Naive thymus-derived CD4-positive, alpha-beta T cell (primary cell): ENCODE measurements at regions of chr13 and their contacts with region 1.

Region 1: GRCh38 chr13:52128714-52129700 is at the start of gene NEK5:
- DNase-seq: peak; percentile 36 to 75 (median 55)
- ATAC-seq: peak; percentile 82
- H3K4me3 ChIP-seq: peak within 1 kb of the TSS; percentile 51
- H3K4me3 Mint-ChIP-seq: peak within 1 kb of the TSS; percentile 85 to 94 (median 88)
- H3K27ac ChIP-seq: no peak within 1 kb of the TSS
- H3K27ac Mint-ChIP-seq: peak within 1 kb of the TSS in 4 of 9 donors; percentile 3 to 19 (median 6)
- H3K4me1 ChIP-seq: peaks cover 11 to 13% of the 10 kb centered on the region in 2 donors
- H3K4me1 Mint-ChIP-seq: peaks cover 11 to 21% (median 18%) of the 10 kb centered on the region in 7 donors
- H3K27me3 ChIP-seq: no peaks in the 10 kb centered on the region
- H3K27me3 Mint-ChIP-seq: peaks cover 0 to 14% (median 6%) of the 10 kb centered on the region in 5 donors
- total RNA-seq, gene NEK5: not detected

Region 2: DNA sequence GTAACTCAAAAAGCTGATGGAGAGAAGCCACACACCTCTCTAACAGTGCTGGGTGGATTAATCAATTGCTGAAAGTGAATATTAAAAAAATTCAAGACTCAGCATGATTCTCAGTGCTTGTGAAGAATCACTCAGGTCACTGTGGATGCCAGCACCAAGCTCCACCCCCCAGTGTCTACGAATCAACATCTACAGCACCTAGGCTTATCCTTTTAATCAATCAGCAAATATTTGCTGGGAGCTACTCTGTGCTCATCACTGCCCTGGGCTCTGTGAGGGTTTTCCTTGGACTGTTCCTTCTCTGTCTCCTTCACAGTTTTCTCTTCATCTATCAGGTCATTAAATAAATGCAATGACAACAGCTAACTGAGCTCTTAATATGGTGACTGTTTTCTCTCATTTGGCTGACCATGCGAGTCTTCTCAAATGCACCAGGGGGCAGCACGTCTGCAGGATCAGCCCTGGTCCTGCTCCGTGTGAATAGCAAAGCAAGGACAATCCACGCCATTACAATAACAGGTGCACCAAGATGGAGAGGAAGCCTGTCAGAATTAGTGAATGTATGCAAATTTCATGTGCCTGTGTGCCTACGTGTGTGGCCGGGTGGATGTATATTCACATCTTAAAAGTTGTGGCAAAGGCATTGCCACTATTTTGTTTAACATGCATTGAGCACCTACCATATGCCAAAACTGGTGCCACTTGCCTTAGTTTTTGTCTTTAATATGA is 1003.3 kb before region 1 on chr13:
- CTCF ChIA-PET with region 1: no interaction called
- POLR2A ChIA-PET with region 1: no interaction called
- intact Hi-C with region 1: loop called in 1 of 2 experiments (anchors 5 kb)
- DNase-seq: peak in 6 of 9 donors; percentile 11 to 41 (median 26)
- ATAC-seq: peak; percentile 80
- H3K4me3 ChIP-seq: no peak overlapping the region
- H3K4me3 Mint-ChIP-seq: no peak overlapping the region
- H3K27ac ChIP-seq: no peak overlapping the region
- H3K27ac Mint-ChIP-seq: no peak overlapping the region
- H3K4me1 ChIP-seq: no peaks in the 10 kb centered on the region
- H3K4me1 Mint-ChIP-seq: peaks cover 0 to 13% (median 0%) of the 10 kb centered on the region in 7 donors
- H3K27me3 ChIP-seq: no peaks in the 10 kb centered on the region
- H3K27me3 Mint-ChIP-seq: peaks cover 0 to 21% (median 13%) of the 10 kb centered on the region in 5 donors

Region 3: DNA sequence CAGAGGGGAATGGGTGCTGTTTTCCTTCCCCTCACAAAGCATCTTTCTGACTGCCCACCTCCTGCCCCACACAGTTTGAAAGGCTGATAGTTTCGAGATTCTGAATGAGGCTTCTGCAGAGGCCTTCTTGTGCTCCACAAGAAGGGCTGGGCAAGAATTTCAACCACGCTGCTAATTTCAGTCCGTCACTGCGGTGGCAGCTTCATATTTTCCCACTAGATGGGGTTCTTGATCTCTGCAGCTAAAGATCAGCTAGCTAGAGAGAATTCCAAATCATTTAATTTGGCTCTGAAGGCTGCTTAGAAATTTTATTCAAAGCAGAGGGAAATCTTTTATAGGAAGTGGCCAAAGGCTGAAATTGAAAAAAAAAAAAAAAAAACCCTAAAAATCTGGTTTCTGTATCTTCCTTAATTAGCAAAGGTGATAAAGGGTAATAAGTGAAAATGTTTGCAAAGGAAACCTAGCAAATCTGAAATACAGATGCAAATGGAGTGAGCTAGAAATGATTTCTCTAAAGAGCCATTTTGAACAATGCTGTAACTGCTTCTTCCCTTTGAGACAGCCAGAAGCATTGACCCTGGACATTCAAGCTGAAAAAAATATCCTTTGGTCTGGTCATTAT is 979.9 kb before region 1 on chr13:
- CTCF ChIA-PET with region 1: no interaction called
- POLR2A ChIA-PET with region 1: no interaction called
- intact Hi-C with region 1: no loop called
- DNase-seq: no peak
- ATAC-seq: no peak
- H3K4me3 ChIP-seq: no peak overlapping the region
- H3K4me3 Mint-ChIP-seq: no peak overlapping the region
- H3K27ac ChIP-seq: no peak overlapping the region
- H3K27ac Mint-ChIP-seq: peak overlapping the region in 2 of 9 donors; percentile 23 to 62
- H3K4me1 ChIP-seq: no peaks in the 10 kb centered on the region
- H3K4me1 Mint-ChIP-seq: peaks cover 4 to 5% (median 5%) of the 10 kb centered on the region in 7 donors
- H3K27me3 ChIP-seq: no peaks in the 10 kb centered on the region
- H3K27me3 Mint-ChIP-seq: peaks cover 4 to 26% (median 8%) of the 10 kb centered on the region in 5 donors

Region 4: DNA sequence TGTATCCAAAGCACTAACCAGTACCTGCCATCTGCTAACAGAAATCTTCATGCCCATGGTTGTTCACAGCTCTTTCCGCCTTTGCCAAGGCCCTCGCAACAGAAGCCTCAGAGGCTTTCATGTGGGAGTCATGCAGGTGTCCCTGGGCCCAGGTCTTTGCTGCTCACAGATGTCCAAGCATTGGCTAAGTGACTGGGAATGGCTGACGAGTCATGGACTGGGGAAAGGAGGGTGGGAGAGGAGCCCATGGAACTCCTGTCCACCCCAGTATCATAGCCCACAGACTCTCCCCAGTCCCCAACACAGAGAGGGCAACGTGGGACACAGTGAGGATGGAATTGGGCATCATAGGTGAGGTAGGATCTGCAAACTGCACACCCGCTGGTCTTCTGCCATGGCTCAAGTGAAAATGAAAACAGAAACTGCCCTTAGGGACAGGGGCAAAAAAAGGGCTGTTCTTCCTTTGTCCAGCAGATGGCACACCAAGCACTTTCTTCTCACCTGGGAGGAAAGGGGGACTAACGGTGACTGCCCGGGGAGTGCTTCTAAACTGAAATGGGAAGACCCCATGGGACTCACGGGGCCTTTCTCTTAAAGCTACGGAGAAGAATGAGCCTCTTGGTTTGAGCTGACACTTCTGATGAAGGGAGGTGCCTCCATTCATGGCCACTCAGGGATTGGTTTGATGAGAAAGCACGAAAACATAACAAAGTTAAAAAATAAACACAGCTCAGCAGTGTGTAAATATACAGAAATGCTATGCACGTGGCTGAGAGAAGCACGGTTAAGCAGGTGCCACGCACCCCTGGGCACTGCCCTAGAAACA is 314.0 kb before region 1 on chr13:
- CTCF ChIA-PET with region 1: interaction called, 15 read pairs
- POLR2A ChIA-PET with region 1: no interaction called
- intact Hi-C with region 1: loop called (anchors 1 kb)
- DNase-seq: peak; percentile 40 to 81 (median 70)
- ATAC-seq: peak; percentile 84
- H3K4me3 ChIP-seq: peak overlapping the region; percentile 3
- H3K4me3 Mint-ChIP-seq: peak overlapping the region; percentile 44 to 100 (median 74)
- H3K27ac ChIP-seq: peak overlapping the region; percentile 85
- H3K27ac Mint-ChIP-seq: peak overlapping the region; percentile 61 to 99 (median 95)
- H3K4me1 ChIP-seq: peaks cover 21 to 75% of the 10 kb centered on the region in 2 donors
- H3K4me1 Mint-ChIP-seq: peaks cover 42 to 90% (median 86%) of the 10 kb centered on the region in 7 donors
- H3K27me3 ChIP-seq: no peaks in the 10 kb centered on the region
- H3K27me3 Mint-ChIP-seq: no peaks in the 10 kb centered on the region

Region 5: DNA sequence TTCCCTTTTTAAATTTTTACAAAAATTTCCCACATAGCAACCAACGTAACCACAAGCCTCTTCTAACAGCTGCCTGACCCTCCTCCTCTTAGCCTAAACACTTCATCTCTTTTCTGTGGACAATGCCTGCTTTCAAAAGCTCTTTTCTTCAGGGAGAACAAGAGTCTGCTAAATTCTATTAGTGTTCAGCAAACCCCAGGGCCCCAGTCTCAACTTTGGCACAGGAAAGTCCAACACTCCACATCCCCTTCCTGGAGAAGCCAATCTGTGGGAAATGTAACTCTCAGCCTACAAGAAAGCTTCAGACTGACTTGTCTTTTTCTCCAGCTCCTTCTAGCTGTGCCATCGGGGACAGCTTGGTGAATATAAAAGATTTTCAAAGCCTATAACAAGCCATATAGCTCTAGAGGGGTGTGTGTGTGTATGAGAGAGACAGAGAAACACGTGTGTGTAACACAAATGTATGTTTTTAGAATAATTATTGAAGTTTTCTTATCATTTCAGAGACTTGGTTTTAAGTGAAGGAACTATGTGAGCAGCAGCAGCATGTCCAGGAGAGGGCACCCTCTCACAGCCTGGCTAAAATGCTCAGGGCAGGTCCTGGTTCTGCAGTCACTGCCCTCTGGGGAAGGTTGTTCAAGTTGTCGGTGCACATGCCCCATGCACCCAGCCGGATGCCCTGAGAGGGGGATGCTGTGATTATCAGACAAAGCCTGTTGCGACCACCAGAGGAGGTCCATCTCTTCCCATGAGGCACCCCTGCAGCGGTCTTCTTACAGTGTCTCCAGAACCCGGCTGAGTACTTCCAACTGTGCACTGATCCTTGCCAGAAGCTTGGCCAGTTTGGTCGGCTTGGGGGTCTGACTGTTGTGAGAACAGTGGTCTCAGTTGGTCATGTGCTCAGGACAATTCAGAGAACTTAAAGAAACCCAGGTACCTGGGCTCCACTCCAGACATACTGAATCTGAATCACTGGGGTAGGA is 232.8 kb before region 1 on chr13:
- CTCF ChIA-PET with region 1: interaction called, 31 read pairs
- POLR2A ChIA-PET with region 1: no interaction called
- intact Hi-C with region 1: loop called (anchors 1 kb)
- DNase-seq: peak in 8 of 9 donors; percentile 16 to 55 (median 40)
- ATAC-seq: peak; percentile 73
- H3K4me3 ChIP-seq: no peak overlapping the region
- H3K4me3 Mint-ChIP-seq: no peak overlapping the region
- H3K27ac ChIP-seq: no peak overlapping the region
- H3K27ac Mint-ChIP-seq: peak overlapping the region in 2 of 9 donors; percentile 22 to 42
- H3K4me1 ChIP-seq: no peaks in the 10 kb centered on the region
- H3K4me1 Mint-ChIP-seq: peaks cover 0 to 8% (median 0%) of the 10 kb centered on the region in 7 donors
- H3K27me3 ChIP-seq: no peaks in the 10 kb centered on the region
- H3K27me3 Mint-ChIP-seq: peaks cover 7 to 26% (median 11%) of the 10 kb centered on the region in 5 donors

Region 6: GRCh38 chr13:51935326-51936201 is 193.4 kb before region 1 on chr13:
- CTCF ChIA-PET with region 1: interaction called, 3 read pairs
- POLR2A ChIA-PET with region 1: no interaction called
- intact Hi-C with region 1: loop called in 1 of 2 experiments (anchors 2 kb)
- DNase-seq: no peak
- ATAC-seq: no peak
- H3K4me3 ChIP-seq: no peak overlapping the region
- H3K4me3 Mint-ChIP-seq: no peak overlapping the region
- H3K27ac ChIP-seq: no peak overlapping the region
- H3K27ac Mint-ChIP-seq: peak overlapping the region in 1 of 9 donors; percentile 51
- H3K4me1 ChIP-seq: peaks cover 0 to under 1% of the 10 kb centered on the region in 2 donors
- H3K4me1 Mint-ChIP-seq: peaks cover 0 to 18% (median 10%) of the 10 kb centered on the region in 7 donors
- H3K27me3 ChIP-seq: no peaks in the 10 kb centered on the region
- H3K27me3 Mint-ChIP-seq: peaks cover 0 to 3% (median 0%) of the 10 kb centered on the region in 5 donors

Region 7: GRCh38 chr13:52070929-52071523 is 58.0 kb before region 1 on chr13:
- CTCF ChIA-PET with region 1: no interaction called
- POLR2A ChIA-PET with region 1: no interaction called
- intact Hi-C with region 1: loop called in 1 of 2 experiments (anchors 2 kb)
- DNase-seq: peak in 1 of 9 donors; percentile 1
- ATAC-seq: no peak
- H3K4me3 ChIP-seq: no peak overlapping the region
- H3K4me3 Mint-ChIP-seq: no peak overlapping the region
- H3K27ac ChIP-seq: no peak overlapping the region
- H3K27ac Mint-ChIP-seq: no peak overlapping the region
- H3K4me1 ChIP-seq: no peaks in the 10 kb centered on the region
- H3K4me1 Mint-ChIP-seq: peaks cover 0 to 14% (median 0%) of the 10 kb centered on the region in 7 donors
- H3K27me3 ChIP-seq: no peaks in the 10 kb centered on the region
- H3K27me3 Mint-ChIP-seq: peaks cover 25 to 41% (median 27%) of the 10 kb centered on the region in 5 donors

Region 8: GRCh38 chr13:52194184-52194868 is 65.3 kb after region 1 on chr13:
- CTCF ChIA-PET with region 1: interaction called, 3 read pairs
- POLR2A ChIA-PET with region 1: no interaction called
- intact Hi-C with region 1: loop called (anchors 1 to 5 kb)
- DNase-seq: peak; percentile 77 to 92 (median 84)
- ATAC-seq: peak; percentile 94
- H3K4me3 ChIP-seq: peak overlapping the region; percentile 67
- H3K4me3 Mint-ChIP-seq: peak overlapping the region; percentile 88 to 99 (median 98)
- H3K27ac ChIP-seq: peak overlapping the region; percentile 78
- H3K27ac Mint-ChIP-seq: peak overlapping the region; percentile 90 to 98 (median 95)
- H3K4me1 ChIP-seq: no peaks in the 10 kb centered on the region
- H3K4me1 Mint-ChIP-seq: peaks cover 15 to 42% (median 37%) of the 10 kb centered on the region in 7 donors
- H3K27me3 ChIP-seq: no peaks in the 10 kb centered on the region
- H3K27me3 Mint-ChIP-seq: peaks cover 0 to 3% (median 0%) of the 10 kb centered on the region in 5 donors